Activated B cell treated with CpG ODN at 0.5 μM for 24 hours (primary cell): ENCODE measurements at regions of chr7 and their contacts with region 1.

Region 1: DNA sequence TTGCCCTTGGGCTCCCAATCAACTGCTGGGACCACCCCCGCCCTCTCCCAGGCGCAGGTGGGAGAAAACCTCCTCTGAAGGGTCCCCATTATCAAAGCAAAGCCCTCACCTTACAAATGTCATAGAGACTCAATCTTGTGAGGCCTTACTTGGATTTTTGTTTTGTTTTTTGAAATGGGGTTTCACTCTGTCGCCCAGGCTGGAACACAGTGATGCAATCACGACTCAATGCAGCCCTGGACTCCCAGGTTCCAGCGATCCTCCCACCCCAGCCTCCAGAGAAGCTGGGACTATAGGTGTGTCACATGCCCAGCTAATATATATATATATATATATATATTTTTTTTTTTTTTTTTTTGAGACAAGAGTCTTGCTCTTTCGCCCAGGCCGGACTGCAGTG is 57.5 kb upstream of the WIPI2 start:
- DNase-seq: no peak
- ATAC-seq: no peak
- H3K4me3 Mint-ChIP-seq: no peak overlapping the region
- H3K27ac Mint-ChIP-seq: no peak overlapping the region
- H3K4me1 Mint-ChIP-seq: no peaks in the 10 kb centered on the region
- H3K27me3 Mint-ChIP-seq: peaks cover 5% of the 10 kb centered on the region
- CTCF ChIP-seq: no peak

Region 2: DNA sequence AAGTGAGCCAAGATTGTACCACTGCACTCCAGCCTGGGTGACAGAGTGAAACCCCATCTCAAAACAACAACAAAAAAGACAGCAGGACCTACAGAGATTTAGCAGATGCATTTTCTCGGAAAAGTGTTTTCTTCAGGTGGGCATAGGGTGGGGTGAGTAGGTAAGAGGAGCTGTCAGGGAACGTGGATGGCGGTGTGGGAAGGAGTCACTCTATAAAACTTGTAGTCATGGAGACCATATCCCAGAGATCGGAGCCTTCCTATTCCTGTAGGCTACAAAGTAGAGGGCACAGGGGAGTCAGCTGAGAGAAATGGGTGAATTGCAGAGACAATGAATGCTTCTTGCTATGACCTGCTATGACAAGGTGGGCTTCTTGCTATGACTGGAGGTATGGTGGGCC is 733.4 kb before region 1 on chr7:
- CTCF ChIA-PET with region 1: no interaction called
- POLR2A ChIA-PET with region 1: no interaction called
- intact Hi-C with region 1: no loop called
- DNase-seq: no peak
- ATAC-seq: no peak
- H3K4me3 Mint-ChIP-seq: no peak overlapping the region
- H3K27ac Mint-ChIP-seq: no peak overlapping the region
- H3K4me1 Mint-ChIP-seq: no peaks in the 10 kb centered on the region
- H3K27me3 Mint-ChIP-seq: no peaks in the 10 kb centered on the region
- CTCF ChIP-seq: no peak

Region 3: GRCh38 chr7:5064391-5065106 is 68.0 kb before region 1 on chr7:
- CTCF ChIA-PET with region 1: no interaction called
- POLR2A ChIA-PET with region 1: no interaction called
- intact Hi-C with region 1: no loop called
- DNase-seq: no peak
- ATAC-seq: no peak
- H3K4me3 Mint-ChIP-seq: no peak overlapping the region
- H3K27ac Mint-ChIP-seq: no peak overlapping the region
- H3K4me1 Mint-ChIP-seq: no peaks in the 10 kb centered on the region
- H3K27me3 Mint-ChIP-seq: no peaks in the 10 kb centered on the region
- CTCF ChIP-seq: no peak

Region 4: GRCh38 chr7:5831196-5831595 is 698.7 kb after region 1 on chr7:
- CTCF ChIA-PET with region 1: no interaction called
- POLR2A ChIA-PET with region 1: no interaction called
- intact Hi-C with region 1: loop called (anchors 5 kb)
- DNase-seq: no peak
- ATAC-seq: no peak
- H3K4me3 Mint-ChIP-seq: no peak overlapping the region
- H3K27ac Mint-ChIP-seq: no peak overlapping the region
- H3K4me1 Mint-ChIP-seq: no peaks in the 10 kb centered on the region
- H3K27me3 Mint-ChIP-seq: no peaks in the 10 kb centered on the region
- CTCF ChIP-seq: no peak